ENCODE measurements at regions of chr1 and their contacts with region 1.

Region 1: GRCh38 chr1:27662707-27663393 is 9.1 kb downstream of the IFI6 start:
- DNase-seq: peak; percentile 53 to 78
- H3K4me3 ChIP-seq: no peak overlapping the region
- H3K27ac ChIP-seq: no peak overlapping the region
- H3K4me1 ChIP-seq: peaks cover 9% of the 10 kb centered on the region; the same call in 1 of the 2 replicates
- H3K27me3 ChIP-seq: no peaks in the 10 kb centered on the region
- CTCF ChIP-seq: peak; percentile 84

Region 2: DNA sequence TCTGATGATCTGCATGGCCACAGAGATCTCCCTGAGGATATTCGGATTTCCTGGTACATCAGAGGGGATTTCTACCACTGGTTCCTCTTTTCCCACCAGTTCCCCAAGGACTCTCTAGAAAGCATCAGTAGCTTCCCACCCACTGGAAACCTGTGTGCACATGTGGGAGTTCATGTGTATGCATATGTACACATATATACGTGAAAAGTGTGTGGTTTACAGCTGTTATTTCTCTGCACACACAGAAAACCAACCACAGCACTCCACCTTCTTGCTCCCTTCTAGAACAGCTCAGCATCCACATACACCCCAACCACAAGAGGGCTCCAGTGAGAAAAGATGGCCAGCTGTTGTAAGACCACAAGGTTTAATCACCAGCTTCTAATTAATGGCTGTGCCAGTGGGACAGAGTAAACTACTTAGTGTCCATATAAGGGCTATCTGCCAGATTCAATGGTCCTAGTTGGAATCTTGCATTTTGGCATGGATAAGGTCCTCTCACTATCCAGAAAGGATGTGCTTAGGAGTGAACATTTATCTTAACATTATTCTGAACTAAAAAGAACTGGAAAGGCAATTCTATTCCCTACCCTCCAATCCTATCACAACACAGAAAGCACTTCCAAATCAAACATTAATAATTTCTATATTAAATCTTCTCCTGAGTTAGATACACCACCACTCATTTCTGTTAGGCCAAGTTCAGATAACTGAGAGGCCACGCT is 246.3 kb before region 1 on chr1:
- CTCF ChIA-PET with region 1: interaction called, 4 read pairs
- POLR2A ChIA-PET with region 1: no interaction called
- intact Hi-C with region 1: loop called (anchors 5 kb)
- DNase-seq: peak; percentile 35 to 42
- H3K4me3 ChIP-seq: no peak overlapping the region
- H3K27ac ChIP-seq: no peak overlapping the region
- H3K4me1 ChIP-seq: no peaks in the 10 kb centered on the region
- H3K27me3 ChIP-seq: no peaks in the 10 kb centered on the region
- CTCF ChIP-seq: peak; percentile 74

Region 3: DNA sequence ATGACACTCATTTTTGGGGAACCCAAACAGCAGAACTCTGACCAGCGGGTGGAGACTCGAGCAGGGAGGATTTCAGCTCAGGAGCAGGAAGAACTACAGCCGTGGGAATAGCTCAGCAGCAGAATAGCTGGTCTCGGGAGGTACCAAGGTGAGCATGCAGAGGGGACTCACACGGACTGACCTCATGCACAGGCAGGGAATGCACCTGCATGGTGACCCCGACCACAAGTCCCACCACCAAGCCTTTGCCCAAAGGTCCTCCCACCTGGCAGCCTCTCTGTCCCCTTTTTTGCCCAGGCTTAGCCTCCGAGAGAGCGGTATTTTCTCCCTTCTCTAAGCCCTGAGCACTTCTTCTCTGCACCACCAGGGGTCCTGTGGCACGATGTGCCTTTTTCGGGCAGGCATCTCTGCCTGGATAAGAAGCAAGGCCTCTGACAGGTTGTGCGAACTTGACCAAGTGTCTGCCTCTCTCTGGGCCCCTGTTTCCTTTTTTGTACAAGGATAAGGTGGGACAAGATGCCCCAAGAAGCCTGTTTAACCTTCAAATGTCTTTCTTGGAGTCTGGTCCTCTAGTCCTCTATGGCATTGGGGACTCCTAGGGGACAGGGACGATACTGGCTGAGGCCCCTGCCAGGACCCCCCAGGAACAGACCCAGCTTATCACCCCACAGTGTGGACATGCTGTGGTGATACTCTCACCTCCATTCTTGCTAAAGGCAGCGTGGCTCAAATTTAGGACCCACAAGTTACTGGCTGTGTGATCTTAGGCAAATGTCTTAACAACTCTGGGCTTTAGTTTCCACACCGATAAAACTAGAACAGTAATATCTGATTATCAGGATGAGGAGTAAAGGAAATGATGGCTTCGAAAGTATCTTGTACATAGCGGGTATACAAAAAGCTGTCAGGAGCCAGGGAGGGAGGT is 18.9 kb before region 1 on chr1:
- CTCF ChIA-PET with region 1: no interaction called
- POLR2A ChIA-PET with region 1: no interaction called
- intact Hi-C with region 1: no loop called
- DNase-seq: peak in 1 of 2 experiments; percentile 33
- H3K4me3 ChIP-seq: no peak overlapping the region
- H3K27ac ChIP-seq: no peak overlapping the region
- H3K4me1 ChIP-seq: no peaks in the 10 kb centered on the region
- H3K27me3 ChIP-seq: no peaks in the 10 kb centered on the region
- CTCF ChIP-seq: peak; percentile 71

Region 4: DNA sequence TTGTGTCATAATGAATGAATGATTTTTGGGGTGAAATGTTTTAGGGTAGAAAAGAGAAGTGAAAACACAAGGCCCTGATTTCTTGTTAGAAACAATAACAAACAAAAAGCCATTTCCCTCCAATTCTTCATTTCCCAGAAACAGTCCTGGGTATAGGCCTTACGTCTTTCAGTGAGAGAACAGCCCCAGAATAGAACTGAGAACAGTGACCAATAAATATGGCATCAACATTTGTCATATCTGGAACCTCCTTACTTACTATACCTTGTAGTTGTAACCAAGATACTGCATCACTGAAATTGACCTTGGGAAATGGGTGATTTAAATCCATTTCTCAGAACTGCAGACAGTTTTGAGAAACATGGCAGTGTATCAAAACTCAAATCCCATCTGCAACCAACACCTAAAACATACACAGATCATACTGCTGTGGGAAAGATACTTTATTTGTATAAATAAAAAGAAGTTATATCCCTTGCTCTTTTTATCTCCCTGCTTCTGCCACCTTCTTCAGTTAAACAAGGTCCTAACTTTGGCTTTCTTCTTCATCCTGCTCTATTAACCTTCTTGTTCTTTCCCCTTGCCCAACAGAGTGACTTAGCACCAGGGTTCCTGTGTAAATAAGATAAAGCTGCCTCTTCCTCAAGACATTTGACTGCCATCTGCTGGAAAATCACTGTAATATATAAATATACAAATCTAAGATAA is 316.5 kb after region 1 on chr1:
- CTCF ChIA-PET with region 1: no interaction called
- POLR2A ChIA-PET with region 1: no interaction called
- intact Hi-C with region 1: loop called (anchors 10 kb)
- DNase-seq: peak in 1 of 2 experiments; percentile 46
- H3K4me3 ChIP-seq: no peak overlapping the region
- H3K27ac ChIP-seq: no peak overlapping the region
- H3K4me1 ChIP-seq: no peaks in the 10 kb centered on the region
- H3K27me3 ChIP-seq: no peaks in the 10 kb centered on the region
- CTCF ChIP-seq: peak; percentile 69

Region 5: GRCh38 chr1:28552758-28553663 is 890.2 kb after region 1 on chr1 and contains the start of gene TRNAU1AP:
- CTCF ChIA-PET with region 1: no interaction called
- POLR2A ChIA-PET with region 1: no interaction called
- intact Hi-C with region 1: no loop called
- DNase-seq: peak; percentile 82 to 97
- H3K4me3 ChIP-seq: peak within 1 kb of the TSS; percentile 63
- H3K27ac ChIP-seq: peak within 1 kb of the TSS; percentile 62
- H3K4me1 ChIP-seq: peaks cover 6% of the 10 kb centered on the region
- H3K27me3 ChIP-seq: no peaks in the 10 kb centered on the region
- CTCF ChIP-seq: no peak
- total RNA-seq, gene TRNAU1AP: 31.7 and 43.0 TPM in 2 replicates